Ovary (tissue), 10 donors: ENCODE measurements at regions of chr4 and their contacts with region 1.

Region 1: DNA sequence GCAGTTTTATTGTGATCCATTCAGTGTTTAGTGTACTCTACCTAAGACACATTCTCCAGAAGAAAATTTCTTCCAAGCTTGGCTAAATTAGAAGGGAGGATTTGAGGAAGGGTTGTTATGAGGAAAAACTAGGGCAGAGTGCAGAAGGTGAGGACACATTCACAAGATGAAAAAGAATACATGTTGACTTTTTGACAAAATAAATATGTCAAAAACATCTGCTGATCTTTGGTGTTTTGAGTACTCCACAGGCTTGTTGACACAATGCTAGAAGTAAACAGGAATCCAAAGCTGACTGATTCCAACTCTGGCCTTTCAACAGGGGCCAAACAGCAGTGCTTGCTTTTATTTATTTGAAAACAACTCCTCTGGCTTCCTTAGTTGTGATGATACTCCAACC is 125.8 kb upstream of the SLC7A11 start:
- DNase-seq: no peak
- H3K4me3 ChIP-seq: no peak overlapping the region
- H3K27ac ChIP-seq: no peak overlapping the region
- H3K4me1 ChIP-seq: no peaks in the 10 kb centered on the region
- H3K27me3 ChIP-seq: no peaks in the 10 kb centered on the region
- CTCF ChIP-seq: no peak
- EP300 ChIP-seq: no peak
- POLR2A ChIP-seq: no peak

Region 2: DNA sequence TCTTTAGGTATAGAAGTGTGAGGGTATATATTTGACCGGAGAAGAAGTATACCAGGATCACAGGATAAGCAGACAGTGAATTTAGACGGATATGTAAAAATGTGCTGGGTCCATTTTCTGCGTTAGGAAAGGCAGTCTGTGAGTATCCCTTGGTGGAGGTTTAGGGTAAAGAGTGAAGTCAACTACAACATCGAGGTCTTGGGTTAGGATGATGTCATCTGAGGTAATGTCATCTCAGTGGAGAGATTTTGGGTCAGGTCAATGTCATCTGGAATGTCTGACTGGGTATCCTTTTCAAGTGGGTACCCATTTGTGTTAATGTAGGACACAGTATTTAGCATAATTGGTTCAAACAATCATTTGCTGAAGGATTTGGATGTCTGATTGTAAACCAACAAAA is 243.5 kb before region 1 on chr4:
- intact Hi-C with region 1: loop called in 1 of 4 experiments (anchors 5 kb)
- DNase-seq: no peak
- H3K4me3 ChIP-seq: no peak overlapping the region
- H3K27ac ChIP-seq: no peak overlapping the region
- H3K4me1 ChIP-seq: no peaks in the 10 kb centered on the region
- H3K27me3 ChIP-seq: no peaks in the 10 kb centered on the region
- CTCF ChIP-seq: no peak
- EP300 ChIP-seq: no peak
- POLR2A ChIP-seq: no peak